AG04449 (cell line): ENCODE measurements at regions of chr3 and their contacts with region 1.

Region 1: GRCh38 chr3:136207489-136208115 is 11.5 kb upstream of the MSL2 start:
- DNase-seq: no peak
- H3K4me3 ChIP-seq: no peak overlapping the region
- CTCF ChIP-seq: no peak

Region 2: GRCh38 chr3:134709561-134710312 is 1497.9 kb before region 1 on chr3:
- CTCF ChIA-PET with region 1: no interaction called
- POLR2A ChIA-PET with region 1: no interaction called
- DNase-seq: no peak
- H3K4me3 ChIP-seq: no peak overlapping the region
- CTCF ChIP-seq: no peak

Region 3: GRCh38 chr3:135887220-135887619 is 320.4 kb before region 1 on chr3:
- CTCF ChIA-PET with region 1: no interaction called
- POLR2A ChIA-PET with region 1: no interaction called
- DNase-seq: no peak
- H3K4me3 ChIP-seq: no peak overlapping the region
- CTCF ChIP-seq: no peak

Region 4: DNA sequence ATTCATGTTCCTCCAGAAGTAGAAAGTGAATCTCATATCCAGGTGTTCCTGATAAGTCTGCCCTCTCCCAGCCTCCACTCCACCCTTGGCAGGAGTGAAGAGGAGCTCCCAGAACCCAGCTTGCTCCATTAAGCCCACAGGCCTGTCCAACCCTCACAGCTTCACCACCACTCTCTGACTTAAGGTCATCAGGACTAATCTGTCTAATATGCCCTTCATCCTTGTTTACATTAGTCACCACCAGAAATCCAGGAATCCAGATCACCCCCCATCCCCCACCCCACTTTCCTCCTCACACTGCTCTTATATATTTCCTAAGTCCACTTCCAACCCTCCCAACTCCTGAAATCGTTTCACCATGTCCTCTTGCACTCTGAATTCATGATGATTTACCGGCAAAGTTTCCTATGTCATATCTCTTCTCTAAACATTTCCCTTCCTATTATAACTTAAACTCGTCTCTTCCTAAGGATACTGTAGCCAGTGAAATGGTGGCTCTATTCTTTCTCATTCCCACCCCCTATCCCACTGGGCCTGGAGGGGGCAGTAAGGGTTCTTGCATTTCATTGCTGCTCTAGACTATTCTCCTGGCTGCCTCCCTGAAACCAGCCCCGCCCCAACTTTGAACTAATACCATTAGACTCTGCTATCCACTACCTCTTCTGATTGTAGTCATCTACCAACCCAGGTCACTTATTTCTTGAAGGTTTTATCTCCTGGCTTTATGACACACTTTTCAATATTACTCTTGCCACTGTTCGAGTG is 198.7 kb before region 1 on chr3:
- CTCF ChIA-PET with region 1: no interaction called
- POLR2A ChIA-PET with region 1: no interaction called
- DNase-seq: no peak
- H3K4me3 ChIP-seq: no peak overlapping the region
- CTCF ChIP-seq: no peak

Region 5: GRCh38 chr3:136196401-136197158 is 11.0 kb before region 1 on chr3:
- CTCF ChIA-PET with region 1: interaction called, 10 read pairs
- POLR2A ChIA-PET with region 1: interaction called, 7 read pairs
- DNase-seq: peak; percentile 97
- H3K4me3 ChIP-seq: peak overlapping the region; percentile 80
- CTCF ChIP-seq: no peak